HCT116 (cell line): ENCODE measurements at regions of chr6 and their contacts with region 1.

Region 1: DNA sequence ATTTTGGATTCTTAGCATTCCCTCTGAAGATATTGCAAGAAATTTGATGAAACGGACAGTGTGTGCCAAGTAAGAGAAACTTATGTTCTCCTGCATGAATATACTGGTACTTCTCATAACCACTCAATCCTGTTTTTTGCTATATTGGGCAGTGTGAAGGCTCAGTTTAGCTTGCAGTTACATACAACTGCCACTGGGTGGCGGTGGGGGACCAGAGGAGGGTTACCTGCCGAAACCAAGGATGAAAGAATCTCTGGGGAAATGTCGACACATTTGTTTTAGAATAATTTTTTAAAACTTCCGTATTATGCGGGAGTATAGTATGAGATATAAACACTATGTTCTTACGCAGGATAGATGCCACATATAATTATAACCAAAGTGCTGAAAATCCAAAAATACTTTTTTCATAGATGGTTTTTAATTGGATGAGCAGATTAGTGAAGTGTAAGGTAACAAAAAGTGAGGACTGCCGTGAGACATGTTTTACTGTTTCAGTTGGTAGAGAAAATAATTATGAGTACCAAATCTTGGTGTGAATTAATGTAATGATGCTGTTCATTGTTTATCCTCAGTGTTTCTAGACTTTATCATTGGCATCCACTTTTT is 9.7 kb downstream of the TRMT11 start:
- DNase-seq: peak; percentile 41
- ATAC-seq: peak; percentile 98
- H3K4me3 ChIP-seq: no peak overlapping the region
- H3K27ac ChIP-seq: no peak overlapping the region
- H3K4me1 ChIP-seq: peaks cover 0 to 3% of the 10 kb centered on the region in 2 experiments; a peak in 1 of 4 replicates
- H3K27me3 ChIP-seq: no peaks in the 10 kb centered on the region
- CTCF ChIP-seq: peak; percentile 67 to 97 (median 95)
- POLR2A ChIP-seq: no peak
- RAD21 ChIP-seq: peak; percentile 83

Region 2: DNA sequence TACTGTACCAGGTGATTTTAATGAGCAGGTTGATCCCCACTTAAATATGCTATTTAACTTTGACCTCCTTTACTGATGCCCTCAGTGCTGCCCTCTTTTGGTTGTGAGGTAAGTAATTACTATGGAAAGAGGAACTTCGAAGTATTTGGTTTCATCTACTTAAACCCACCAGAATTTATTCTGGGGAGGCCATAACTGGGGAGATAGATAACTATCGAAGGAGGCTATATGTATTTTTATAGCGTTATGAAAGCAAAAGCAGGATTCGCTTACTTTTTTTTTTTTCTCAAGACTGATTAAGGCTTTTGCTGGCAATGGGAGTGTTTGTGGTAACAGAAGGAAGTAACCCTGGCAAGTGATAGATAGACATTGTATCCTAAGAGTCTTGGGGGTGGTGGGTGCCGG is 174.9 kb after region 1 on chr6:
- CTCF ChIA-PET with region 1: no interaction called
- POLR2A ChIA-PET with region 1: no interaction called
- RAD21 ChIA-PET with region 1: no interaction called
- intact Hi-C with region 1: loop called (anchors 1 kb)
- DNase-seq: no peak
- ATAC-seq: peak; percentile 78
- H3K4me3 ChIP-seq: no peak overlapping the region
- H3K27ac ChIP-seq: no peak overlapping the region
- H3K4me1 ChIP-seq: no peaks in the 10 kb centered on the region
- H3K27me3 ChIP-seq: no peaks in the 10 kb centered on the region
- CTCF ChIP-seq: peak; percentile 27 to 78 (median 59); a peak in 5 of 6 replicates
- POLR2A ChIP-seq: no peak
- RAD21 ChIP-seq: peak; percentile 39

Region 3: DNA sequence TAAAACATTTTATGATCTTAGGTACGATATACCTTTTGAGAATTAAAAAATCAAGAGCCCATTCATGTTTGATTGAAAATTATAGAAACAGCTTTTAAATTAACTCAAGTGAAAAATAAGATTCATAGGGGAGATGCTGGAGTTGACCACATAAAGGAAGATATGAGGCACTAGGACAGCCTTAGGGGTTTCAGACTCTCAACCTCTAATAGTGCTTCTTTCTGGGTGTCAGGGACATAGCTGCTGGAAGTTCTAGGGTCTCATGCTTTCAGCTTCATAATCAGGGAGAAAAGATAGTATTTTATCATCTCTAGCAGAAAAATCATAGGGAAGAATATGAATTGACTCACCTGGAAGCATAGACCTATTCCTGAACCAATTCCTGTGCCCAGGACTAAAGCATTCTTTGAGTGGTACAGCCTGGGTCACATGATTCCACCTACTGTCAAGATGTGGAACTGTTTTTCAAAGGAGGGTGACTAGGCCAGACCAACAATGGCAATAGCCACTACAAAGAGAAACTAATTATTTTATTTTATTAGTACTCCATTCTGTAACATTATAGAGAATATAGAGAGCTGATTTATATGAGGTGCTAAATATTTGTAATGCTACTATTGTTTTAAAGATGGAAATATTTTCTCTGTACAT is 316.1 kb after region 1 on chr6:
- CTCF ChIA-PET with region 1: no interaction called
- POLR2A ChIA-PET with region 1: no interaction called
- RAD21 ChIA-PET with region 1: no interaction called
- intact Hi-C with region 1: loop called (anchors 5 kb)
- DNase-seq: peak; percentile 18
- ATAC-seq: peak; percentile 96
- H3K4me3 ChIP-seq: no peak overlapping the region
- H3K27ac ChIP-seq: no peak overlapping the region
- H3K4me1 ChIP-seq: no peaks in the 10 kb centered on the region
- H3K27me3 ChIP-seq: no peaks in the 10 kb centered on the region
- CTCF ChIP-seq: peak in 2 of 3 experiments; percentile 38; a peak in 3 of 6 replicates
- POLR2A ChIP-seq: no peak
- RAD21 ChIP-seq: peak; percentile 33

Region 4: GRCh38 chr6:126339796-126340609 is 343.9 kb after region 1 on chr6 and contains the start of gene CENPW:
- CTCF ChIA-PET with region 1: no interaction called
- POLR2A ChIA-PET with region 1: no interaction called
- RAD21 ChIA-PET with region 1: no interaction called
- intact Hi-C with region 1: loop called (anchors 10 kb)
- DNase-seq: peak; percentile 81
- ATAC-seq: peak; percentile 93
- H3K4me3 ChIP-seq: peak within 1 kb of the TSS; percentile 89 to 90
- H3K27ac ChIP-seq: peak within 1 kb of the TSS; percentile 42
- H3K4me1 ChIP-seq: peaks cover 5 to 8% of the 10 kb centered on the region in 2 experiments; a peak in 2 of 4 replicates
- H3K27me3 ChIP-seq: no peaks in the 10 kb centered on the region
- CTCF ChIP-seq: no peak
- POLR2A ChIP-seq: peak; percentile 47
- RAD21 ChIP-seq: no peak
- total RNA-seq, gene CENPW: 46.9 TPM